T-cell (primary cell): ENCODE measurements at regions of chr7 and their contacts with region 1.

Region 1: DNA sequence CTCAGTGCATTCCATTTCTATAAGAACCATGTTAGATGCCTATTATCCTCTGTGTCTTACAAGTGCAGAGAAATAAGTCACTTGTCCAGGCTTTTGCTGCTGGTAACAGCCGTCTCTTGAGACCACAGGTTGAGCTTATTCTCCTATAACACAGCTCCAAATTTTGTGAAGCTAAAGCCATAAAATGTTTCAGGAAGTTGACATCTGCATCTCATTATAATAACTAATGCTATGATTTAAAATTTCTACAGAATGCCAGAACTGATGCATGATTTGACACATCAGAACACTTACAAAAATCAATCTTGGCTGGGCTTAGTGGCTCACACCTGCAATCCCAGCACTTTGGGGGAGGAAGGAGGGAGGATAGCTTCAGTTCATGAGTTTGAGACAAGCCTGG is 986.9 kb downstream of the TYW1 start:
- DNase-seq: no peak
- ATAC-seq: no peak
- H3K4me3 ChIP-seq: no peak overlapping the region
- H3K4me3 Mint-ChIP-seq: no peak overlapping the region
- H3K27ac ChIP-seq: no peak overlapping the region
- H3K27ac Mint-ChIP-seq: no peak overlapping the region
- H3K4me1 ChIP-seq: no peaks in the 10 kb centered on the region
- H3K4me1 Mint-ChIP-seq: no peaks in the 10 kb centered on the region
- H3K27me3 ChIP-seq: no peaks in the 10 kb centered on the region
- H3K27me3 Mint-ChIP-seq: no peaks in the 10 kb centered on the region

Region 2: GRCh38 chr7:67962863-67963262 is 20.6 kb before region 1 on chr7:
- CTCF ChIA-PET with region 1: no interaction called
- POLR2A ChIA-PET with region 1: interaction called in 1 of 2 experiments, 13 read pairs
- DNase-seq: no peak
- ATAC-seq: no peak
- H3K4me3 ChIP-seq: no peak overlapping the region
- H3K4me3 Mint-ChIP-seq: no peak overlapping the region
- H3K27ac ChIP-seq: no peak overlapping the region
- H3K27ac Mint-ChIP-seq: no peak overlapping the region
- H3K4me1 ChIP-seq: no peaks in the 10 kb centered on the region
- H3K4me1 Mint-ChIP-seq: no peaks in the 10 kb centered on the region
- H3K27me3 ChIP-seq: no peaks in the 10 kb centered on the region
- H3K27me3 Mint-ChIP-seq: no peaks in the 10 kb centered on the region

Region 3: GRCh38 chr7:68420342-68421192 is 437.1 kb after region 1 on chr7:
- CTCF ChIA-PET with region 1: no interaction called
- POLR2A ChIA-PET with region 1: no interaction called
- DNase-seq: no peak
- ATAC-seq: no peak
- H3K4me3 ChIP-seq: no peak overlapping the region
- H3K4me3 Mint-ChIP-seq: no peak overlapping the region
- H3K27ac ChIP-seq: no peak overlapping the region
- H3K27ac Mint-ChIP-seq: no peak overlapping the region
- H3K4me1 ChIP-seq: no peaks in the 10 kb centered on the region
- H3K4me1 Mint-ChIP-seq: no peaks in the 10 kb centered on the region
- H3K27me3 ChIP-seq: peaks cover 0 to 3% of the 10 kb centered on the region in 2 experiments
- H3K27me3 Mint-ChIP-seq: no peaks in the 10 kb centered on the region